Activated CD4-positive, alpha-beta T cell treated with anti-CD3 and anti-CD28 coated beads, Interleukin-2, amount 10 ng/mL, durations not matched to agents 7 days and 5 days (primary cell): ENCODE measurements at regions of chr1 and their contacts with region 1.

Region 1: DNA sequence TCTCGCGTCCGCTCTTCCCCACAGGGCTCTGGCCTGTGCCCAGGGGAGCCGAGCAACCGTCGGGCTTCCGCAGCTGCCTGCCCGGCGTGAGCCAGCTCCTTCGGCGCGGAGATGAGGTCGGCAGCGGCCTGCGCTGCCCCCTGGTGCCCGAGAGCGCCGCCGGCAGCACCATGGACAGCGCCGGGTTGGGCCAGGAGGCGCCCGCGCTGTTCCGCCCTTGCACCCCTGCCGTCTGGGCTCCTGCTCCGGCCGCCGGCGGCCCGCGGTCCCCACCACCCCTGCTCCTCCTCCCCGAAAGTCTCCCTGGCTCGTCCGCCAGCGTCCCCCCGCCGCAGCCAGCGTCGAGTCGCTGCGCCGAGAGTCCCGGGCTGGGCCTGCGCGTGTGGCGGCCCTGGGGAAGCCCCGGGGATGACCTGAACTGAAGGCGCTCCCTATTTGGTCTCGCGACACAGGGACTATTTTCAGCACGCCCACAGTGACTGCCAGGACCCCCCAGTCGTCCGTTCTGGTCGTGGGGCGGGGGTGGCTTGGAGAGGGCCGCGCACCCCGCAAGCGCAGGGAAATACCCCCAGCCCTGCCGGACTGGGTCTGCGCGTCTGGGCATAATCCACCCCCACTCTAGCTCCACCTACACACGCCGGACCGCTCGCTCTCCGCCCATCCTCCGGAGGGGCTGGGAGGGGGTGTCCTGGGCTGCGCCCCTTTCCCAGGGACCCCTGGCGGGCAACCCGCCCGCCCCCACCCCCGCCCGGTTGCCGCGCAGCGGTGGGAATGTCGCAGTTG is 1.3 kb downstream of the HES3 start:
- DNase-seq: peak; percentile 79
- H3K4me3 Mint-ChIP-seq: no peak overlapping the region
- H3K27ac Mint-ChIP-seq: no peak overlapping the region
- H3K4me1 Mint-ChIP-seq: peaks cover 22% of the 10 kb centered on the region
- H3K27me3 Mint-ChIP-seq: peaks cover 61% of the 10 kb centered on the region

Region 2: DNA sequence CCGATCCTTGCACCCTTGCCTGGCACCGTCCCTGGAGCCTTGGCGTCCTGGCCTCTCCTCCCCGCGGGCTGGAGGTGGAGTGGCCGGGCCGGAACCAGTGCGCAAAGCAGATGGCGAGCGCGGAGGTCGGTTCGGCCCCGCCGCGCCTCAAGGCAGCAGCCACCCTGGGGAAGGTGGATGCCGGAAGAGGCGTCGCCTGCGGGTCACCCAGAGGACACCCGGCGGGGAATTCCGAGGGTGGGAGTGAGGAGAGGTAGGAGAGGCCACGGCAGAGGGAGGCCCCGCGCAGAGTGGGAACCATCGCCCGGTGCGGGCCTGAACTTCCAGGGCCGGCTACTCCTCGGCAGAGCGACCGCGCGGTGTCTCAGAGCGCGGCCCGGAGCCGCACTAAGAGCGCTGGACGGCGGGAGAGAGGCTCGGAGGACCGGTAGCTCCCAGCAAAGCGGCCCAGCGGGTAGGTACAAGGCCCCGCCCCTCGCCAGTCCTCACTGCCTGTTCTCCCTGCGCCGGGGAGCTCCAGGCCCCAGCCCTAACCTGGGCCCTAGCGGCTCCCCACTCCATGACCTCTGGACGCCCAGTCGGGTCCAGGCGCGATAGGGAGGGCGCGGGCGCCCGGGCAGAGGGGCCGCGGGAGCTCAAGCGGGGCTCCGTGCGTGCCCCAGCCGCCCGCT is 39.3 kb before region 1 on chr1 and contains the start of gene RNF207:
- CTCF ChIA-PET with region 1: interaction called, 19 read pairs
- POLR2A ChIA-PET with region 1: no interaction called
- DNase-seq: peak; percentile 49
- H3K4me3 Mint-ChIP-seq: peak within 1 kb of the TSS; percentile 61
- H3K27ac Mint-ChIP-seq: peak within 1 kb of the TSS; percentile 36
- H3K4me1 Mint-ChIP-seq: peaks cover 17% of the 10 kb centered on the region
- H3K27me3 Mint-ChIP-seq: peaks cover 18% of the 10 kb centered on the region
- total RNA-seq, gene RNF207: 4.0 to 7.4 TPM

Region 3: DNA sequence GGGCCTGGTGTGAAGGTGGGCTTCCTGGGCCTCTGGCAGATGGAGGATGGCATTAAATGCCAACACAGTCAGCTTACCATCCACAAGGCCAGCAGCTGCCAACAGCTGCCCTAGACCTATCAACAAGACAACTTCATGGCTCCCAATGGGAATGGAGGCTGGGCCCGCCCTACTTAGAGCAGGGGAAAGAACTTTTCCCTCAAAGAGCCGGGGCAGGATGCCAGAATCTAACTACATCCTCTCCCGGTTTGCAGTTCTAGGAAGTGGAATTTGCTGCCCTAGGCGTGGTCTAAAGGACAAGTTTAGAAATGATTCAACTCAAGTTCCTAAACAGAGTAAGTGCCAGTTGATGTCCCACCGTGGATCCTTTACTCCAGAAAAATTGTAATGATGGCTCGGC is 22.6 kb before region 1 on chr1:
- CTCF ChIA-PET with region 1: no interaction called
- POLR2A ChIA-PET with region 1: no interaction called
- DNase-seq: no peak
- H3K4me3 Mint-ChIP-seq: no peak overlapping the region
- H3K27ac Mint-ChIP-seq: no peak overlapping the region
- H3K4me1 Mint-ChIP-seq: peaks cover 1% of the 10 kb centered on the region
- H3K27me3 Mint-ChIP-seq: no peaks in the 10 kb centered on the region

Region 4: DNA sequence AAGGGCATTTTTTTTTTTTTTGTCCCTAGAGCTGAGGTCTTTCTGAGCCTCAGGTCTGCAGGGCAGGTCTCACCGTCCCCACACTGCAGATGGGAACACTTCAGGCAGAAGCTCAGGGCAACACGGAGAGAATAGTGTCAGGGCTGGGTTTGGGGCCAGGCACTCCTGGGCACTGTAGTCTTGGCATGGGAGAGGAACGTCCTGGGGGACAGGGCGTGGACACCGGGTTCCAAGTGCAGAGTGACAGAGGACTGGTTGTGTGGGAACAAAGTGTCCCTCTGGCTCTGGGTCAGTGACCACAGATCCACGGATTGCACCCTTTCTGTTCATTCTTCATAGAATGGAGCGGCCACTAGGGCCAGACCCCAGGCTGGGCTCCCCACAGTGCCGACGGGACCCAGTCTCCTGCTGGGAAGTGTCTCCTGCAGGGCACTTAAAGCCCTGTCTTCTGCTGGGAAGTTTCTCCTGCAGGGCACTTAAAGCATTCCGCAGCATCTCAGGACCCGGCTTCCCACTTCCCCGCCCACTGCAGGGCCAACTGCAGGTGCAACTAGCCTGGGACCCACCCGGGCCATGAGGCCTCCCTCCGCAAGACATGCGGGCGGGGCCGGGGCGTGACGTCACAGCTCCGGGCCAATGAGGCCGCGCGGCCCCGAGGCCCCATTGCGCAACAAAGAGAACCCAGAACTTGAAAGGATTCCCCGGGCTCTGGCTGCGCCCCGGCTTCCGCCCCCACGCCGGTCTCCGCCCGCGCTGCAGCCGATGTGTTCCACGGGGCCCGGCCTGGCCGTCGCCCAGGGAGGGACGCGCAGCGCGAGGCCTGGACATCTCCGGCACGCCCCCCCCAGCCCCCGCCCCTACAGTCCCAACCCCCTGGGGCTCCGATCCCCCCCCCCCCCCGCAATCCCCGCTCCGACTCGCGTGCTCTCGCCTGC is 14.5 kb after region 1 on chr1:
- CTCF ChIA-PET with region 1: interaction called, 10 read pairs
- POLR2A ChIA-PET with region 1: no interaction called
- DNase-seq: peak; percentile 85
- H3K4me3 Mint-ChIP-seq: peak overlapping the region; percentile 45
- H3K27ac Mint-ChIP-seq: no peak overlapping the region
- H3K4me1 Mint-ChIP-seq: peaks cover 13% of the 10 kb centered on the region
- H3K27me3 Mint-ChIP-seq: peaks cover 18% of the 10 kb centered on the region